PC-3 (cell line): ENCODE measurements at regions of chr3 and their contacts with region 1.

Region 1: DNA sequence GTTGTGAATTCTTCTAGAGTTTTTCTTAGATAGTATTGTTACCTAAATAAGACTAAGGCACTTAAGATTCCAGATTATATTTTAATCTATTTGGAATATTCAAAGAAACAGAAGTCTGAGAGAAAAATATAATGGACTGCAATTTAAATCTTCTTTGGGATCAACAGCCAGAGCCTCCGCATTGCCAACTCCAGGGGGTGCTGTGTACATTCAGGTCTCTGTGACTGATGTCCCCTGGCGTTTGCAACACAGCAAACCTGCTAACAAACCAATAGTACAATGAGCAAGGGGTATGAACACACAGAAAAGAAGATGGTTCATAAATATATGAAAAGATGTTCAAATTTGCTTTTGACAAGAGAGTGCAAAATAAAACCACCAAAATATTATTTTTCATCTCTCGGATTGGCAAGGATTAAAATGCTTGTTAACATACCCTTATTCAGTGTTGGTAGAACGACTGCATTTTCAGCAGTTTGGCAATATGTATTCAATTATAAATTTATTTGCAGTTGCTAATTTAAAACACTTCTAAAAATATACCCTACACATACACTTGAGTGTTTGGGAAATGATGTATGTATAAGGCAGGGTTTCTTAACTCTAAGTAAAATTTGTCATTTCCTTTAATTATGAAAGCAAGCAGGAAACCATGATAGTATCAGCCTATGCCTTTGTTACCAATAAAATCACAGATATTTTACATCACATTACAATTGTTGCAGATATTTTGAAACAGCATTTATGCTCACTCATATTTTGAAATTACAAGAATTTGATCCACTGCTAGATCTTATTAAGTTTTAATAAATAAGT is 16.1 kb upstream of the TM4SF1 start:
- DNase-seq: peak; percentile 84
- ATAC-seq: peak; percentile 16; the same call in 1 of the 2 replicates
- H3K4me3 ChIP-seq: no peak overlapping the region
- H3K27ac ChIP-seq: peak overlapping the region; percentile 96
- H3K4me1 ChIP-seq: peaks cover 81% of the 10 kb centered on the region
- H3K27me3 ChIP-seq: no peaks in the 10 kb centered on the region
- CTCF ChIP-seq: peak; percentile 99

Region 2: GRCh38 chr3:149466192-149466591 is 72.6 kb after region 1 on chr3:
- CTCF ChIA-PET with region 1: no interaction called
- POLR2A ChIA-PET with region 1: no interaction called
- intact Hi-C with region 1: no loop called
- DNase-seq: peak; percentile 45
- ATAC-seq: no peak
- H3K4me3 ChIP-seq: no peak overlapping the region
- H3K27ac ChIP-seq: no peak overlapping the region
- H3K4me1 ChIP-seq: peaks cover 11% of the 10 kb centered on the region; the same call in 1 of the 2 replicates
- H3K27me3 ChIP-seq: no peaks in the 10 kb centered on the region
- CTCF ChIP-seq: no peak

Region 3: GRCh38 chr3:149480325-149481017 is 86.9 kb after region 1 on chr3:
- CTCF ChIA-PET with region 1: interaction called, 4 read pairs
- POLR2A ChIA-PET with region 1: interaction called, 4 read pairs
- intact Hi-C with region 1: loop called (anchors 1 kb)
- DNase-seq: peak; percentile 94
- ATAC-seq: peak; percentile 96
- H3K4me3 ChIP-seq: no peak overlapping the region
- H3K27ac ChIP-seq: peak overlapping the region; percentile 55
- H3K4me1 ChIP-seq: peaks cover 17% of the 10 kb centered on the region
- H3K27me3 ChIP-seq: no peaks in the 10 kb centered on the region
- CTCF ChIP-seq: peak; percentile 98